ENCODE measurements at regions of chr4 and their contacts with region 1.

Region 1: GRCh38 chr4:139651282-139652194 is 14.1 kb upstream of the MGST2 start:
- DNase-seq: peak; percentile 52 to 87 (median 59)
- ATAC-seq: peak; percentile 92
- H3K4me3 ChIP-seq: no peak overlapping the region
- H3K4me3 Mint-ChIP-seq: no peak overlapping the region
- H3K27ac ChIP-seq: no peak overlapping the region
- H3K27ac Mint-ChIP-seq: no peak overlapping the region
- H3K4me1 ChIP-seq: peaks cover 5% of the 10 kb centered on the region
- H3K4me1 Mint-ChIP-seq: peaks cover 6% of the 10 kb centered on the region
- H3K27me3 ChIP-seq: peaks cover 0 to 5% of the 10 kb centered on the region in 2 experiments
- H3K27me3 Mint-ChIP-seq: peaks cover 4% of the 10 kb centered on the region
- CTCF ChIP-seq: peak; percentile 95

Region 2: GRCh38 chr4:139229534-139230039 is 422.0 kb before region 1 on chr4:
- CTCF ChIA-PET with region 1: interaction called, 4 read pairs
- POLR2A ChIA-PET with region 1: no interaction called
- intact Hi-C with region 1: loop called in 1 of 2 experiments (anchors 10 kb)
- DNase-seq: peak in 4 of 14 experiments; percentile 17 to 71 (median 67)
- ATAC-seq: peak; percentile 71
- H3K4me3 ChIP-seq: no peak overlapping the region
- H3K4me3 Mint-ChIP-seq: no peak overlapping the region
- H3K27ac ChIP-seq: no peak overlapping the region
- H3K27ac Mint-ChIP-seq: no peak overlapping the region
- H3K4me1 ChIP-seq: no peaks in the 10 kb centered on the region
- H3K4me1 Mint-ChIP-seq: no peaks in the 10 kb centered on the region
- H3K27me3 ChIP-seq: no peaks in the 10 kb centered on the region
- H3K27me3 Mint-ChIP-seq: no peaks in the 10 kb centered on the region
- CTCF ChIP-seq: peak; percentile 82

Region 3: GRCh38 chr4:139416073-139416673 is 235.4 kb before region 1 on chr4:
- CTCF ChIA-PET with region 1: no interaction called
- POLR2A ChIA-PET with region 1: no interaction called
- intact Hi-C with region 1: loop called (anchors 5 to 10 kb)
- DNase-seq: peak in 4 of 14 experiments; percentile 50 to 77 (median 61)
- ATAC-seq: peak; percentile 32
- H3K4me3 ChIP-seq: no peak overlapping the region
- H3K4me3 Mint-ChIP-seq: no peak overlapping the region
- H3K27ac ChIP-seq: no peak overlapping the region
- H3K27ac Mint-ChIP-seq: no peak overlapping the region
- H3K4me1 ChIP-seq: peaks cover 5% of the 10 kb centered on the region
- H3K4me1 Mint-ChIP-seq: peaks cover 5% of the 10 kb centered on the region
- H3K27me3 ChIP-seq: no peaks in the 10 kb centered on the region
- H3K27me3 Mint-ChIP-seq: no peaks in the 10 kb centered on the region
- CTCF ChIP-seq: peak; percentile 77

Region 4: DNA sequence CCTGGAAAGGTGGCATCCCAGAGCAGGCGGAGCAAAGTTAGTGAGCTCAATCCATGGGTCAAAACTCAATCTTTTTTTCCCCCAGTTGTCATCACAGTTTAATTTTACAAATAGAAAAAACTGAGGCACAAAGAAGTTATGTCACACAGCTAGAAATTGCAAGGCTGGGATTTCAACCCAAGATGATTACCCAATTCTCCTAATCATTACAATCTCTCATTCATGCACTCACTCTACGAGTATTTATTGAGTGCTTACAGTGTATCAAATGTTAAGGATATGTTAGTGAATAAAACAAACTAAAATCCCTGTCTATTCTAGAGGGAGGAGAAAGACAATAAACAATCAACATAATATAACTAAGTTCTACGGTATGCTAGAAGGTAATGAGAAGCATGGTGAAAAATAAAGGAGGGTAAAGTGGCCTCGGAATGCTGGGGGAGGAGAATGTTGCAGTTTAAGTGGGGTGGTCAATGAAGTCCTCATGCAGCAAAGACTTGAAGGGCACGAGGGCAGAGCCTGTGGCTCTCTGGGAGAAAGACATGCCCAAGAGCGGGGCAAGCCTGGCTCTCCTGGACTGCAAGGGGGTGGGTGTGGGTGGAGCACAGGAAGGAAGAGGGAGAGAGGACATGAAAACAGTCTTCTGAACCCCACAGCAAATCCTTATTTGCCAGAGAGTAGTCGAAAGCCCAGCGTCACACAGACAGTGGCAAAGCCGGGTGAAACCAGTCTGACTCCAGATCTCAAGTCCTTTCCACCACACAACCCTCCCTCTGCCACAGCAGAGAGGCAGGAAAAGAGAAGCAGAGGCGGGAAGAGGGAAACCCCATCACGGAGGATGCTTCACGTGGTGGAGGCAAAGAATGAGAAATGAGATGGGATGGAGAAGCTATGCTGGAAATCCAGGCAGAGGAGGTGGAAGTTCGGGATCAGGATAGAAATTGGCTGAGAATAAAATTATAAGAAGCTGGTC is 149.3 kb before region 1 on chr4:
- CTCF ChIA-PET with region 1: interaction called, 7 read pairs
- POLR2A ChIA-PET with region 1: no interaction called
- intact Hi-C with region 1: loop called (anchors 1 to 2 kb)
- DNase-seq: no peak
- ATAC-seq: no peak
- H3K4me3 ChIP-seq: no peak overlapping the region
- H3K4me3 Mint-ChIP-seq: no peak overlapping the region
- H3K27ac ChIP-seq: no peak overlapping the region
- H3K27ac Mint-ChIP-seq: no peak overlapping the region
- H3K4me1 ChIP-seq: peaks cover 3% of the 10 kb centered on the region
- H3K4me1 Mint-ChIP-seq: no peaks in the 10 kb centered on the region
- H3K27me3 ChIP-seq: no peaks in the 10 kb centered on the region
- H3K27me3 Mint-ChIP-seq: no peaks in the 10 kb centered on the region
- CTCF ChIP-seq: no peak

Region 5: DNA sequence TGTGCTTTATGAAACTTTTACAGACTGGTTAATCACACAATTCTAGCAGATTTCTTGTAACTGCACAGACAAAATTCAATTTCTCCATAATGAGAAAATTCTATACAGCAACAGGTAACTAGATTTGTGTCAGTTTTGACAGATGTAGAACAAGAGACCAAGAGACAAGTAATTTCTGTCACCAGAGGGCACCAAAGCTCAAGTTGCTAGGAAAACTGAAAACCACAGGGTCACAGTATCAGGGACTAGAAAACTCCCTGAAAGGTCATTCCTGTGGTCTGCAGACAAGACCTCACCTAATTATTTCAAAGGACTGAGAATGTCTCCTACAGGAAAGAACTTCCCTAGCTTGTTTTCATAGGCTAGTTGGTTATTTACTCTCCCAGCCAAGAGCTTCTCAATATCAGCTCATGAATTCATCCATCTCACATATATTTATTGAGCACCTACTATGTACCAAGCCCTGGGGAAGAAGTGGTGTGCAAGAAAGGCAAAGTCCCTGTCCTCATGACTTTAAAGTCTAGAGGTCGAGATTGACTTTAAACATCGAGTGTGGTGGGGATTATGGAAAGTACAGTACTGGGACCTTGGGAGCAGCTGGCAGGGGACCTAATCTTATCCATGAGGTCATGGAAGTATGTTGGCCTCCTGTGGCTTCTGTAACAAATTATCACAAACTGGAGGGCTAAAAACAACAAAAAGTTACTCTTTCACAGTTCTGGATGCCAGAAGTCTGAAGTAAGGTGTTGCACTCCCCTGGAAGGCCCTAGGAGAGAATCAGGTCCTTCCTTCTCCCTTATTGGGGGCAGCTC is 47.8 kb before region 1 on chr4:
- CTCF ChIA-PET with region 1: interaction called, 12 read pairs
- POLR2A ChIA-PET with region 1: no interaction called
- intact Hi-C with region 1: loop called (anchors 1 kb)
- DNase-seq: peak in 7 of 14 experiments; percentile 5 to 71 (median 48)
- ATAC-seq: no peak
- H3K4me3 ChIP-seq: no peak overlapping the region
- H3K4me3 Mint-ChIP-seq: no peak overlapping the region
- H3K27ac ChIP-seq: no peak overlapping the region
- H3K27ac Mint-ChIP-seq: no peak overlapping the region
- H3K4me1 ChIP-seq: peaks cover 12% of the 10 kb centered on the region
- H3K4me1 Mint-ChIP-seq: peaks cover 15% of the 10 kb centered on the region
- H3K27me3 ChIP-seq: no peaks in the 10 kb centered on the region
- H3K27me3 Mint-ChIP-seq: peaks cover 11% of the 10 kb centered on the region
- CTCF ChIP-seq: peak; percentile 62

Measured in CD4-positive, alpha-beta T cell (primary cell).